Spleen (tissue), 13 donors: ENCODE measurements at regions of chr2 and their contacts with region 1.

Region 1: GRCh38 chr2:233251306-233252116 is at the start of gene ATG16L1:
- DNase-seq: peak; percentile 100
- H3K4me3 ChIP-seq: peak within 1 kb of the TSS; percentile 73 to 99 (median 95)
- H3K27ac ChIP-seq: peak within 1 kb of the TSS; percentile 67 to 96 (median 84)
- H3K4me1 ChIP-seq: peaks cover 24 to 86% (median 45%) of the 10 kb centered on the region in 6 donors
- H3K27me3 ChIP-seq: no peaks in the 10 kb centered on the region
- CTCF ChIP-seq: peak; percentile 95 to 99 (median 97)
- POLR2A ChIP-seq: peak in 1 of 3 donors; percentile 46
- total RNA-seq, gene ATG16L1: 32.0 to 45.8 (median 34.7) TPM

Region 2: GRCh38 chr2:232133078-232133477 is 1118.4 kb before region 1 on chr2:
- intact Hi-C with region 1: no loop called
- DNase-seq: no peak
- H3K4me3 ChIP-seq: no peak overlapping the region
- H3K27ac ChIP-seq: no peak overlapping the region
- H3K4me1 ChIP-seq: peaks cover 0 to 12% (median 7%) of the 10 kb centered on the region in 6 donors
- H3K27me3 ChIP-seq: no peaks in the 10 kb centered on the region
- CTCF ChIP-seq: no peak
- POLR2A ChIP-seq: no peak

Region 3: GRCh38 chr2:232611551-232612218 is 639.8 kb before region 1 on chr2:
- intact Hi-C with region 1: loop called (anchors 5 kb)
- DNase-seq: peak; percentile 88
- H3K4me3 ChIP-seq: no peak overlapping the region
- H3K27ac ChIP-seq: no peak overlapping the region
- H3K4me1 ChIP-seq: peaks cover 0 to 5% (median 0%) of the 10 kb centered on the region in 6 donors
- H3K27me3 ChIP-seq: no peaks in the 10 kb centered on the region
- CTCF ChIP-seq: peak; percentile 42 to 88 (median 81)
- POLR2A ChIP-seq: no peak

Region 4: GRCh38 chr2:232854082-232854481 is 397.4 kb before region 1 on chr2:
- intact Hi-C with region 1: loop called (anchors 5 kb)
- DNase-seq: no peak
- H3K4me3 ChIP-seq: no peak overlapping the region
- H3K27ac ChIP-seq: no peak overlapping the region
- H3K4me1 ChIP-seq: peaks cover 0 to 15% (median 3%) of the 10 kb centered on the region in 6 donors
- H3K27me3 ChIP-seq: no peaks in the 10 kb centered on the region
- CTCF ChIP-seq: no peak
- POLR2A ChIP-seq: no peak

Region 5: GRCh38 chr2:233053928-233054784 is 197.4 kb before region 1 on chr2:
- intact Hi-C with region 1: loop called (anchors 10 kb)
- DNase-seq: peak; percentile 92
- H3K4me3 ChIP-seq: no peak overlapping the region
- H3K27ac ChIP-seq: no peak overlapping the region
- H3K4me1 ChIP-seq: peaks cover 4 to 43% (median 19%) of the 10 kb centered on the region in 6 donors
- H3K27me3 ChIP-seq: no peaks in the 10 kb centered on the region
- CTCF ChIP-seq: peak; percentile 51 to 96 (median 89)
- POLR2A ChIP-seq: no peak